ENCODE measurements at regions of chr14 and their contacts with region 1.

Region 1: GRCh38 chr14:73295198-73295796 is 58.0 kb downstream of the PAPLN start:
- DNase-seq: no peak
- ATAC-seq: peak; percentile 23; the same call in 2 of the 3 replicates
- H3K4me3 ChIP-seq: no peak overlapping the region
- H3K27ac ChIP-seq: no peak overlapping the region
- H3K4me1 ChIP-seq: peaks cover 23% of the 10 kb centered on the region
- H3K27me3 ChIP-seq: no peaks in the 10 kb centered on the region
- CTCF ChIP-seq: peak; percentile 55 to 75 (median 58); a peak in 5 of 6 replicates
- EP300 ChIP-seq: no peak
- POLR2A ChIP-seq: no peak
- RAD21 ChIP-seq: peak; percentile 64

Region 2: DNA sequence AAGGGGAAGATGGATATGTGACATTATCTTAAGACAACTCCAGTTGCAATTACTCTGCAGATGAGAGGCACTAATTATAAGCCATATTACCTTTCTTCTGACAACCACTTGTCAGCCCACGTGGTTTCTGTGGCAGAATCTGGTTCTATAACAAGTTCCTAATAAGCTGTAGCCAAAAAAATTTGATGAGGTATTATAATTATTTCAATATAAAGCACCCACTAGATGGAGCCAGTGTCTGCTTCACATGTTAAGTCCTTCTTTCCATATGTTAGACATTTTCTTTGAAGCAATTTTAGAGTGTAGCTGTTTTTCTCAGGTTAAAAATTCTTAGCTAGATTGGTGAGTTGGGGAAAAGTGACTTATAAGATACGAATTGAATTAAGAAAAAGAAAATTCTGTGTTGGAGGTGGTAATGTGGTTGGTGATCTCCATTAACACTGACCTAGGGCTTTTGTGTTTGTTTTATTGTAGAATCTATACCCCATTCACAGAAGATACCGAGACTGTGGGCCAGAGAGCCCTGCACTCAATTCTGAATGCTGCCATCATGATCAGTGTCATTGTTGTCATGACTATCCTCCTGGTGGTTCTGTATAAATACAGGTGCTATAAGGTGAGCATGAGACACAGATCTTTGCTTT is 122.1 kb before region 1 on chr14:
- CTCF ChIA-PET with region 1: interaction called, 13 read pairs
- POLR2A ChIA-PET with region 1: no interaction called
- RAD21 ChIA-PET with region 1: interaction called, 6 read pairs
- SMC1A ChIA-PET with region 1: interaction called, 7 read pairs
- in situ Hi-C with region 1: no loop called
- intact Hi-C with region 1: no loop called
- DNase-seq: no peak
- ATAC-seq: peak; percentile 60
- H3K4me3 ChIP-seq: no peak overlapping the region
- H3K27ac ChIP-seq: no peak overlapping the region
- H3K4me1 ChIP-seq: no peaks in the 10 kb centered on the region
- H3K27me3 ChIP-seq: no peaks in the 10 kb centered on the region
- CTCF ChIP-seq: peak; percentile 19 to 62 (median 36); a peak in 4 of 6 replicates
- EP300 ChIP-seq: no peak
- POLR2A ChIP-seq: no peak
- RAD21 ChIP-seq: peak; percentile 68

Region 3: DNA sequence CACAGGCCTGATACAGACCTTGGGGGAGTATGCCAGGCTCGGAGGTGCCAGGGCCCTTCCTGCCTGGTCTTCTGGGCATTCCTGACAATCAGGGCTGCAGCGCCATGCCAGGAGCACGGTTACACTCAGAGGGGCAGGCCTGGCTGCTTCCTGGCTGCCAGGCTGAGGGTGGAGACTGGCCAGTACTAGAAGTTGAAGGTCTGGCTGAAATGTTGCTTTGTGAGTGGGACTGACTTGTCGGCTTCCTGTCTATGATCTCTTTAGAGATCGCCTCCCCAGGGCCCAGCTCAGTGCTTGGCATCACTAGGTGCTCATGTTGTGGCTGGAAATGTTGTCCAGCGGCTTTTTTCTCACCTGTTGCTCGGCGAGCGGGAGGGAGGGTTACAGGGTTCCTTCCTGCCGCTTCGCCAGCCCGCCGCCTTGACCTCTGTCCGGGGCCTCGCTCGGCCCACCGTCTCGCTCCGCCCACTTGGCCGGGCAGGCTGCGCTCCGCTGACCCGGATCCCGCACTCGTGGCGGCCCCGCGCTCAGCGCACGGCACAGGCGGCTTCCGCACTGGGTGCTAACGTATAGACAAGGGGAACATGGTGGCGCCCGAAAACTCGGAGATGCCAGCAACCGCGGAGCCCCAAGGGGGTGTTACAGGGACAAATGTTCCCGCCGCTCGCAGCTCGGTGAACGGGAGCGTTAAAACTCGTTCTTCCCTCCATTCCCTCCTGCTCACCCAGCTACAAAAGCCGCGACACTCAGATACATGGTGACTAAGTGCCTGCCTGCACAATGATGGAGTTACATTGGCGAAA is 25.4 kb before region 1 on chr14:
- CTCF ChIA-PET with region 1: interaction called, 10 read pairs
- POLR2A ChIA-PET with region 1: interaction called, 6 read pairs
- RAD21 ChIA-PET with region 1: interaction called, 20 read pairs
- SMC1A ChIA-PET with region 1: interaction called, 42 read pairs
- in situ Hi-C with region 1: no loop called
- intact Hi-C with region 1: no loop called
- DNase-seq: no peak
- ATAC-seq: peak; percentile 97
- H3K4me3 ChIP-seq: peak overlapping the region; percentile 46; the same call in 1 of the 2 replicates
- H3K27ac ChIP-seq: peak overlapping the region; percentile 3; the same call in 1 of the 2 replicates
- H3K4me1 ChIP-seq: peaks cover 14% of the 10 kb centered on the region
- H3K27me3 ChIP-seq: no peaks in the 10 kb centered on the region
- CTCF ChIP-seq: no peak
- EP300 ChIP-seq: 0 out of 4 replicates have a peak, but pooled peaks of 1 of the 2 experiments have one; percentile 21
- POLR2A ChIP-seq: no peak; the same call in 1 of the 2 replicates
- RAD21 ChIP-seq: no peak

Region 4: DNA sequence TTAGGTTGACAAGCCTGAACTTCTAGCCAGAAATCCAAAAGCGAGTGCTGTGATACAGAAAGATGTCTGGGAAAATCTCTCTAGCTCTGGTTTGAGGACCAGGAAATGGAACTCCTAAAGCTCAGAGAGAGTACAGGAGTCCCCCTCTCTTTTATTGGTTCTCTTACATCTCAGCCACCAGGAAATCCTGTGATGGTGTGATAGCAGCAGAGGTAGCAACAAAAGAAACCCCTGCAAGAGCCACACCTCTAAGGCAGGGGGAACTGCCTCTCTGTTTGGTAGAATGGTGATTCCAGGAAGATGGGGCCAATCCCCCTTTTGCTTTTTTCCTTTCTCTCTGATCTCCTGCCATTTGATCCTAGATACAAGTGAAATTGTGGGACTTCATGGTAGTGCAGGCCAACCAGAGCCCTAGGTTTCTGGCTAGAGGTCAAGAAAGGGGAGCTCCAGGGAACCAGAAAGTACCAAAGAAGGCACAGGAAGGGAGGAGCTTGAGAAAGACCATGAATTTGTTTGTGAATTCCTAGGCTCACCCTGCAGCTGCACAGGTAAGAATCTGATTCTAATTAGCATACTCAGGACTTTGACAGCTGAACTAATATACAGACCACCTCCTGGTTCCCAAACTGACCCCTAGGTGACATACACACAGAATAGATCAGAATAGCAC is 30.5 kb after region 1 on chr14:
- CTCF ChIA-PET with region 1: interaction called, 11 read pairs
- POLR2A ChIA-PET with region 1: interaction called, 4 read pairs
- RAD21 ChIA-PET with region 1: interaction called, 5 read pairs
- SMC1A ChIA-PET with region 1: interaction called, 7 read pairs
- in situ Hi-C with region 1: no loop called
- intact Hi-C with region 1: no loop called
- DNase-seq: no peak
- ATAC-seq: no peak
- H3K4me3 ChIP-seq: no peak overlapping the region
- H3K27ac ChIP-seq: no peak overlapping the region
- H3K4me1 ChIP-seq: no peaks in the 10 kb centered on the region
- H3K27me3 ChIP-seq: no peaks in the 10 kb centered on the region
- CTCF ChIP-seq: no peak
- EP300 ChIP-seq: no peak
- POLR2A ChIP-seq: no peak
- RAD21 ChIP-seq: no peak

Region 5: GRCh38 chr14:73452341-73453186 is 157.3 kb after region 1 on chr14:
- CTCF ChIA-PET with region 1: interaction called, 252 read pairs
- POLR2A ChIA-PET with region 1: interaction called, 8 read pairs
- RAD21 ChIA-PET with region 1: interaction called, 591 read pairs
- SMC1A ChIA-PET with region 1: interaction called, 41 read pairs
- in situ Hi-C with region 1: no loop called
- intact Hi-C with region 1: no loop called
- DNase-seq: no peak
- ATAC-seq: peak; percentile 69
- H3K4me3 ChIP-seq: no peak overlapping the region; the same call in 1 of the 2 replicates
- H3K27ac ChIP-seq: peak overlapping the region; percentile 32; the same call in 1 of the 2 replicates
- H3K4me1 ChIP-seq: peaks cover 11% of the 10 kb centered on the region
- H3K27me3 ChIP-seq: no peaks in the 10 kb centered on the region
- CTCF ChIP-seq: no peak
- EP300 ChIP-seq: no peak
- POLR2A ChIP-seq: no peak
- RAD21 ChIP-seq: no peak

Region 6: GRCh38 chr14:73472185-73473114 is 177.2 kb after region 1 on chr14:
- CTCF ChIA-PET with region 1: interaction called, 252 read pairs
- POLR2A ChIA-PET with region 1: interaction called, 23 read pairs
- RAD21 ChIA-PET with region 1: interaction called, 591 read pairs
- SMC1A ChIA-PET with region 1: interaction called, 311 read pairs
- in situ Hi-C with region 1: loop called (anchors 5 kb)
- intact Hi-C with region 1: loop called (anchors 1 kb)
- DNase-seq: peak; percentile 57
- ATAC-seq: peak; percentile 86
- H3K4me3 ChIP-seq: no peak overlapping the region
- H3K27ac ChIP-seq: peak overlapping the region; percentile 29; the same call in 1 of the 2 replicates
- H3K4me1 ChIP-seq: peaks cover 15% of the 10 kb centered on the region
- H3K27me3 ChIP-seq: no peaks in the 10 kb centered on the region
- CTCF ChIP-seq: peak; percentile 56 to 82 (median 65); a peak in 5 of 6 replicates
- EP300 ChIP-seq: peak in 1 of 2 experiments; percentile 39; a peak in 1 of 4 replicates
- POLR2A ChIP-seq: no peak
- RAD21 ChIP-seq: peak; percentile 99

Region 7: GRCh38 chr14:73568381-73568781 is 273.1 kb after region 1 on chr14:
- CTCF ChIA-PET with region 1: interaction called, 13 read pairs
- POLR2A ChIA-PET with region 1: no interaction called
- RAD21 ChIA-PET with region 1: interaction called, 4 read pairs
- SMC1A ChIA-PET with region 1: no interaction called
- in situ Hi-C with region 1: no loop called
- intact Hi-C with region 1: no loop called
- DNase-seq: no peak
- ATAC-seq: no peak
- H3K4me3 ChIP-seq: peak overlapping the region; percentile 60
- H3K27ac ChIP-seq: peak overlapping the region; percentile 68
- H3K4me1 ChIP-seq: peaks cover 7% of the 10 kb centered on the region
- H3K27me3 ChIP-seq: no peaks in the 10 kb centered on the region
- CTCF ChIP-seq: no peak
- EP300 ChIP-seq: no peak
- POLR2A ChIP-seq: no peak
- RAD21 ChIP-seq: no peak